Activated naive CD4-positive, alpha-beta T cell treated with anti-CD3 and anti-CD28 coated beads for 36 hours (primary cell): ENCODE measurements at regions of chr2 and their contacts with region 1.

Region 1: DNA sequence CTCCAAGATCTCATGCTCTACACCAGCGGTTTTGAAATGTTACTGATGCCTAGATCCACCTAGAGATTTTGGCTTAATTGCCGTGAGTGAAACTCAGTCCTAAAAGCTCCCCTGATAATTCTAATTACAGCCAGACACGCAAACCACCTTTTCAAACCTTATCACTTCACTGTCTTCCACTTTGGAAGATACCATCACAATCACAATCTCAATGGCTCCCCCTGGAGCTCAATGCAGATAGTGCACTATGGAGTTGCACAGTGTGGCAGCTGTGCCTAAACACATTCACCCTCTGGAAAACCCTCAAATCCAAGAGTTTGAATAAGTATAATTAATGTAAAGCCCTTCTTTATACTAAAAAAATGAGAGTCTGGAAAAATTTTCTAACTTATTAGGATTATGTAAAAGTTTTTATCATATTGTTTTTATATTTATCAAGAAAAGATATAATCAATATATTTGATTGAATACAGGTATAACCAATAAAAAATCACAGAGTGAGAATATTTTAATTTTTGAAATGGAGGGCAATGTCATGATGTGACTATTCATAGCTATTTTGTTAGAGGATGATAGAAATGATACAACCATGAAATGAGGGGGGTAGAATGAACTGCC is 102.9 kb upstream of the SLC8A1 start:
- DNase-seq: peak; percentile 71
- H3K4me3 Mint-ChIP-seq: no peak overlapping the region
- H3K27ac Mint-ChIP-seq: no peak overlapping the region
- H3K4me1 Mint-ChIP-seq: no peaks in the 10 kb centered on the region
- H3K27me3 Mint-ChIP-seq: peaks cover 3% of the 10 kb centered on the region

Region 2: DNA sequence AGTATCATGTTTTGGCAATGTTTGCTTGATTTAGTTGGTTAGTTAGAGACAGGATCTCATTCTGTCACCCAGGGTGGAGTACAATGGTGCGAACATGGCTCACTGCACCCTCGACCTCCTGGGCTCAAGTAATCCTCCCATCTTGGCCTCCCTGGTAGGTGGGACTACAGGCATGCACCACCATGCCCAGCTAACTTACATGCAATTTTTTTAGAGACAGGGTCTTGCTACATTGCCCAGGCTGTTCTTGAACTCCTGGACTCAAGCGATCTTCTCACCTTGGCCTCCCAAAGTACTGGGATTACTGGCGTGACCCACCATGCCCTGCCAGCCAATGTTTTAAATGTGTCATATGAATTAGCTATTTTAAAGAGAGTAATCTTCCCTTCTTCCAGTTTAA is 1294.7 kb before region 1 on chr2:
- CTCF ChIA-PET with region 1: no interaction called
- intact Hi-C with region 1: no loop called
- DNase-seq: no peak
- H3K4me3 Mint-ChIP-seq: no peak overlapping the region
- H3K27ac Mint-ChIP-seq: no peak overlapping the region
- H3K4me1 Mint-ChIP-seq: peaks cover 8% of the 10 kb centered on the region
- H3K27me3 Mint-ChIP-seq: no peaks in the 10 kb centered on the region

Region 3: GRCh38 chr2:40448468-40449079 is 106.2 kb before region 1 on chr2:
- CTCF ChIA-PET with region 1: no interaction called
- intact Hi-C with region 1: loop called (anchors 1 kb)
- DNase-seq: peak; percentile 14
- H3K4me3 Mint-ChIP-seq: no peak overlapping the region
- H3K27ac Mint-ChIP-seq: no peak overlapping the region
- H3K4me1 Mint-ChIP-seq: peaks cover 23% of the 10 kb centered on the region
- H3K27me3 Mint-ChIP-seq: peaks cover 39% of the 10 kb centered on the region

Region 4: DNA sequence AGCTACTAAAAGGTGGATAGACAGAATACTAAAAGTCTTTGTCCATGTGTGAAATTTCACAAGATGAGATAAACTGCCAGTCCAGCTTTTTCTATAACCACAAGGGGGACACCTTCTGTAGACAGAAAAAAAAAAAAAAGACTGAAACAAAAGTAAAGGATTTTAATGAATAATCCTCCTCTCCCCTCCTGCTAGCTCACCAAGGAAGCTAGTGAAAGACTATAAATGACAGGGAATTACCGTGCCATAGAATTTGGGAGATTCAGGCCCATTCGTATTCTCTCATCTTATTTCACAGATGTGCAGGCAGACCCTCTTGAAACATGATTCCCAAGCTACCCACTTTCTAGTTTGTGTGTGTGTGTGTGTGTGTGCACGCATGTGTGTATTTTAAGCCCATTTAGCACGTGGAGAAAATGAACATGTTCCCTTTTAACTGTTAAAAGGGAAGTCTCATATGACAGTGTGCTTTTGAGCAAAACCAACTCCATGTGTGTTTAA is 66.6 kb before region 1 on chr2:
- CTCF ChIA-PET with region 1: no interaction called
- intact Hi-C with region 1: loop called (anchors 2 kb)
- DNase-seq: no peak
- H3K4me3 Mint-ChIP-seq: no peak overlapping the region
- H3K27ac Mint-ChIP-seq: no peak overlapping the region
- H3K4me1 Mint-ChIP-seq: peaks cover 13% of the 10 kb centered on the region
- H3K27me3 Mint-ChIP-seq: no peaks in the 10 kb centered on the region

Region 5: GRCh38 chr2:40783704-40784103 is 228.9 kb after region 1 on chr2:
- CTCF ChIA-PET with region 1: no interaction called
- intact Hi-C with region 1: no loop called
- DNase-seq: no peak
- H3K4me3 Mint-ChIP-seq: no peak overlapping the region
- H3K27ac Mint-ChIP-seq: no peak overlapping the region
- H3K4me1 Mint-ChIP-seq: no peaks in the 10 kb centered on the region
- H3K27me3 Mint-ChIP-seq: no peaks in the 10 kb centered on the region